CD14-positive monocyte (primary cell): ENCODE measurements at regions of chr12 and their contacts with region 1.

Region 1: GRCh38 chr12:103771466-103771865 is 69.6 kb downstream of the NT5DC3 start:
- DNase-seq: peak; percentile 30 to 39 (median 33)
- H3K4me3 ChIP-seq: no peak overlapping the region
- H3K4me3 Mint-ChIP-seq: no peak overlapping the region
- H3K27ac ChIP-seq: no peak overlapping the region
- H3K27ac Mint-ChIP-seq: peak overlapping the region in 2 of 7 donors; percentile 16 to 63
- H3K4me1 ChIP-seq: no peaks in the 10 kb centered on the region
- H3K4me1 Mint-ChIP-seq: peaks cover 6% of the 10 kb centered on the region
- H3K27me3 ChIP-seq: no peaks in the 10 kb centered on the region
- H3K27me3 Mint-ChIP-seq: no peaks in the 10 kb centered on the region
- CTCF ChIP-seq: peak; percentile 72

Region 2: GRCh38 chr12:103737881-103738280 is 33.6 kb before region 1 on chr12:
- intact Hi-C with region 1: no loop called
- DNase-seq: no peak
- H3K4me3 ChIP-seq: no peak overlapping the region
- H3K4me3 Mint-ChIP-seq: no peak overlapping the region
- H3K27ac ChIP-seq: no peak overlapping the region
- H3K27ac Mint-ChIP-seq: no peak overlapping the region
- H3K4me1 ChIP-seq: no peaks in the 10 kb centered on the region
- H3K4me1 Mint-ChIP-seq: no peaks in the 10 kb centered on the region
- H3K27me3 ChIP-seq: no peaks in the 10 kb centered on the region
- H3K27me3 Mint-ChIP-seq: peaks cover 0 to 8% (median 5%) of the 10 kb centered on the region in 3 donors
- CTCF ChIP-seq: no peak

Region 3: GRCh38 chr12:103868215-103868614 is 96.7 kb after region 1 on chr12:
- intact Hi-C with region 1: loop called (anchors 2 to 5 kb)
- DNase-seq: no peak
- H3K4me3 ChIP-seq: no peak overlapping the region
- H3K4me3 Mint-ChIP-seq: no peak overlapping the region
- H3K27ac ChIP-seq: no peak overlapping the region
- H3K27ac Mint-ChIP-seq: no peak overlapping the region
- H3K4me1 ChIP-seq: no peaks in the 10 kb centered on the region
- H3K4me1 Mint-ChIP-seq: no peaks in the 10 kb centered on the region
- H3K27me3 ChIP-seq: no peaks in the 10 kb centered on the region
- H3K27me3 Mint-ChIP-seq: peaks cover 0 to 3% (median 1%) of the 10 kb centered on the region in 3 donors
- CTCF ChIP-seq: no peak